HepG2 (cell line): ENCODE measurements at regions of chr12 and their contacts with region 1.

Region 1: GRCh38 chr12:113358381-113359132 is at the start of gene PLBD2:
- DNase-seq: peak; percentile 80
- ATAC-seq: peak; percentile 93
- H3K4me3 ChIP-seq: peak within 1 kb of the TSS; percentile 80 to 94 (median 86)
- H3K27ac ChIP-seq: peak within 1 kb of the TSS; percentile 38
- H3K4me1 ChIP-seq: peaks cover 37% of the 10 kb centered on the region
- H3K27me3 ChIP-seq: no peaks in the 10 kb centered on the region; a peak in 1 of 5 replicates
- CTCF ChIP-seq: peak; percentile 53
- EP300 ChIP-seq: no peak
- POLR2A ChIP-seq: peak; percentile 57 to 84; a peak in 3 of 4 replicates
- RAD21 ChIP-seq: peak; percentile 40; the same call in 1 of the 2 replicates
- total RNA-seq, gene PLBD2: 5.5 and 8.5 TPM in 2 replicates

Region 2: GRCh38 chr12:113196996-113197395 is 161.6 kb before region 1 on chr12:
- CTCF ChIA-PET with region 1: no interaction called
- POLR2A ChIA-PET with region 1: no interaction called
- in situ Hi-C with region 1: loop called (anchors 10 kb)
- intact Hi-C with region 1: loop called (anchors 5 kb)
- DNase-seq: peak; percentile 69
- ATAC-seq: peak; percentile 91
- H3K4me3 ChIP-seq: no peak overlapping the region
- H3K27ac ChIP-seq: no peak overlapping the region
- H3K4me1 ChIP-seq: peaks cover 14% of the 10 kb centered on the region
- H3K27me3 ChIP-seq: no peaks in the 10 kb centered on the region
- CTCF ChIP-seq: peak; percentile 82
- EP300 ChIP-seq: no peak
- POLR2A ChIP-seq: no peak
- RAD21 ChIP-seq: peak; percentile 59; the same call in 1 of the 2 replicates

Region 3: GRCh38 chr12:113208041-113208934 is 150.3 kb before region 1 on chr12:
- CTCF ChIA-PET with region 1: no interaction called
- POLR2A ChIA-PET with region 1: no interaction called
- in situ Hi-C with region 1: no loop called
- intact Hi-C with region 1: loop called (anchors 5 kb)
- DNase-seq: no peak
- ATAC-seq: peak; percentile 34; the same call in 2 of the 3 replicates
- H3K4me3 ChIP-seq: no peak overlapping the region
- H3K27ac ChIP-seq: no peak overlapping the region
- H3K4me1 ChIP-seq: peaks cover 49% of the 10 kb centered on the region
- H3K27me3 ChIP-seq: no peaks in the 10 kb centered on the region
- CTCF ChIP-seq: no peak
- EP300 ChIP-seq: no peak
- POLR2A ChIP-seq: no peak
- RAD21 ChIP-seq: no peak

Region 4: DNA sequence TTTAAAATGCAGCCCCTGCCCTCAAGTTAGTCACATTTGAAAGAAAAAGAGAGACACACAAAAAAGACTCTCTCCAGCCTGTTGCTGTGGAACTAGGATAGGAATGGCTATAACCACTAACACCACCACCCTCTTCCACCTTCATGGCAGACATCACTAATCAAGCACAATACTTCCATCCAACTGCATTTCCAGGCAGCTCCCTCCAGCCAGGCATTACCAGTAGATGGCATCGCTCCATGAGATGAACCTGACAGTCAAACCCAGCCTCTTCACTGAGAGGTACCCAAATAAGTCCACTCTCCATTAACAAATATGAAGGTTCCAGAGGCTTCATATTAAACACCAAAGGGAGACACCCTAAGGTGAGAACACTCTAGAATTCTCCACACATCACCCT is 48.1 kb before region 1 on chr12:
- CTCF ChIA-PET with region 1: interaction called, 3 read pairs
- POLR2A ChIA-PET with region 1: no interaction called
- in situ Hi-C with region 1: no loop called
- intact Hi-C with region 1: loop called (anchors 1 kb)
- DNase-seq: peak; percentile 15
- ATAC-seq: no peak
- H3K4me3 ChIP-seq: no peak overlapping the region
- H3K27ac ChIP-seq: no peak overlapping the region
- H3K4me1 ChIP-seq: no peaks in the 10 kb centered on the region
- H3K27me3 ChIP-seq: no peaks in the 10 kb centered on the region
- CTCF ChIP-seq: peak; percentile 52
- EP300 ChIP-seq: no peak
- POLR2A ChIP-seq: no peak
- RAD21 ChIP-seq: no peak

Region 5: GRCh38 chr12:113334786-113335540 is 23.6 kb before region 1 on chr12 and contains the start of gene SLC8B1:
- CTCF ChIA-PET with region 1: no interaction called
- POLR2A ChIA-PET with region 1: interaction called, 14 read pairs
- in situ Hi-C with region 1: no loop called
- intact Hi-C with region 1: loop called (anchors 1 kb)
- DNase-seq: peak; percentile 64
- ATAC-seq: peak; percentile 98
- H3K4me3 ChIP-seq: peak within 1 kb of the TSS; percentile 46 to 71 (median 55)
- H3K27ac ChIP-seq: no peak within 1 kb of the TSS
- H3K4me1 ChIP-seq: peaks cover 22% of the 10 kb centered on the region
- H3K27me3 ChIP-seq: 0 out of 5 replicates have a peak, but pooled peaks cover 0 to 1% of the 10 kb centered on the region in 2 experiments
- CTCF ChIP-seq: no peak
- EP300 ChIP-seq: no peak
- POLR2A ChIP-seq: peak; percentile 60 to 89; a peak in 3 of 4 replicates
- RAD21 ChIP-seq: peak; percentile 33; the same call in 1 of the 2 replicates
- total RNA-seq, gene SLC8B1: 3.3 and 6.8 TPM in 2 replicates